Activated CD8-positive, alpha-beta memory T cell treated with anti-CD3 and anti-CD28 coated beads, Interleukin-2, amount 10 ng/mL, durations not matched to agents 7 days and 5 days (primary cell): ENCODE measurements at regions of chr3 and their contacts with region 1.

Region 1: DNA sequence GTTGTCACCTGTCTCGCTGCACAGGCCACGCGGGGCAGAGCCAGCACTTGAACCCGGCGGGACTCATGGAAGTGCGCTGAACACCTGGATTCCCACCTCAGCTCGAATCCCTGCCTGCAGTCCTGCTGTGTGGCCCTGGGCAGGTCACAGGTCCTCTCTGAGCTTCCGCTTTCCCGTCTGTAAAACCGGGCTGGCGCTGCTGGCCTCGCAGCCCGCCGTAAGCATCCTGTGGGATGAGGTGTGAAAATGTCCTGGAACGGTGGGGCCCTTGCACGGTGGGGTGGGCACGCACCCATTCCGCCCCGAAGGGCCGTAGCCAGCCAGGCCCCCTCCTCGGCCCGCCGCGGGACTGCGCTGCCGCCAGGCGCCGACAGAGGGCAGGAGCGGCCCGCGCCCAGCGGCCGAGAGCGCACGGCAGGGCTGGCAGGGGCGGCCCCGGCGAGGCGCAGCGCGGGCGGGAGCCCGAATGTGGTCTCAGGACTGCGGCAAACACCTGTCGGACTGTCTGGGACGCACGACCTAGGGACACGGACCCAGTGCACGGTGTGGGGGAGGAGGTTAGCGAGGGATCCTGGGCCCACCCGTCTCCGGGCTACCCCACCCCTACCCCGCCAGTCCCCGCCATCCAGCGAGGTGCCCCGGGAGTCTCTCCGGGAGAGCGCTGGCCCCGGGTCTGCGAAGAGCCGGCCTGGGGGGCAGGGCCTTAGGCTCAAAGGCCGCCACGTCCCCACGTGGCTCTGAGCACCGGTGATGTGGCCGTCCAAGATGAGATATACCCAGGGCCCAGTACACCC is 40.4 kb downstream of the DNAJB8 start:
- DNase-seq: peak; percentile 57
- ATAC-seq: peak; percentile 94
- H3K4me3 Mint-ChIP-seq: no peak overlapping the region
- H3K27ac Mint-ChIP-seq: no peak overlapping the region
- H3K4me1 Mint-ChIP-seq: peaks cover 2% of the 10 kb centered on the region
- H3K27me3 Mint-ChIP-seq: peaks cover 12% of the 10 kb centered on the region

Region 2: GRCh38 chr3:128170805-128171516 is 255.4 kb before region 1 on chr3:
- CTCF ChIA-PET with region 1: no interaction called
- DNase-seq: peak; percentile 39
- ATAC-seq: no peak
- H3K4me3 Mint-ChIP-seq: no peak overlapping the region
- H3K27ac Mint-ChIP-seq: no peak overlapping the region
- H3K4me1 Mint-ChIP-seq: peaks cover 2% of the 10 kb centered on the region
- H3K27me3 Mint-ChIP-seq: no peaks in the 10 kb centered on the region

Region 3: DNA sequence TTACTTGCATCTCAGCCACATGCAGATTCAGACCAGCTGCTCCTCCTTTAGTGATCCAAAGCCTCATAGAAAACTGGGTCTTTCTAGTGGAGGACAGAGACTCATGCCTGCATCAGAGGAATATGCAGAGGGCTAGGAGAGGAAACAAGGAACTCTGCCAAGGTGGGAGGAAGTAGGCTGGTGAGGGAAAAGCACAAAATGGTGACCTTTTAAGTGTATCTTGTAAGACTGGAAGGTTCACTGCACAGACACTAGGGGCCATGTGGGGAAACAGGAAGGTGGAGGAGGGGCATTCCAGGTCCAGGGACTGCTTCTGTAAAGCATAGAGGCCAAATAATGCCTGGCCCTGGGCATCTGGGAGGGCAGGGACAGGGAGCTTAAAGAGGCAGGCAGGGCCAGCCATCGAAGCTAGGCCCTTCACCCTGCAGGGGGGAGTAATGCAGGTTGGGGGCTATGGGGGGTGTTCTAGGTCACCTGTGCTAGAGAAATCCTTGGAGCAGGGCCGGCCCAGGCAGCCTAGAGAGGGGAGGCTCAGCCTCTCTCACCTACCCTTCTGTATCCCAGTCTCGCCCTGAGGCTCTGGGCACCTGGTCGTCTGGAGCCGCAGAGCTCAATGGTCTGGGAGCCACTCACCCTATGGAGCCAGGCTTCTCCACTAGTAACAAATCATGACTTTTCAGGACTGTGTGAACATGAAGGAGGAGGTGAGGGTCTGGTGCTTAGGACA is 77.4 kb before region 1 on chr3:
- CTCF ChIA-PET with region 1: no interaction called
- DNase-seq: no peak
- ATAC-seq: no peak
- H3K4me3 Mint-ChIP-seq: no peak overlapping the region
- H3K27ac Mint-ChIP-seq: no peak overlapping the region
- H3K4me1 Mint-ChIP-seq: no peaks in the 10 kb centered on the region
- H3K27me3 Mint-ChIP-seq: no peaks in the 10 kb centered on the region

Region 4: GRCh38 chr3:128447561-128448013 is 21.3 kb after region 1 on chr3:
- CTCF ChIA-PET with region 1: interaction called, 11 read pairs
- DNase-seq: peak; percentile 77
- ATAC-seq: peak; percentile 66
- H3K4me3 Mint-ChIP-seq: no peak overlapping the region
- H3K27ac Mint-ChIP-seq: peak overlapping the region; percentile 76
- H3K4me1 Mint-ChIP-seq: peaks cover 24% of the 10 kb centered on the region
- H3K27me3 Mint-ChIP-seq: peaks cover 6% of the 10 kb centered on the region

Region 5: GRCh38 chr3:128497387-128498126 is 71.2 kb after region 1 on chr3:
- CTCF ChIA-PET with region 1: interaction called, 15 read pairs
- DNase-seq: peak; percentile 67
- ATAC-seq: peak; percentile 75
- H3K4me3 Mint-ChIP-seq: peak overlapping the region; percentile 46
- H3K27ac Mint-ChIP-seq: no peak overlapping the region
- H3K4me1 Mint-ChIP-seq: peaks cover 6% of the 10 kb centered on the region
- H3K27me3 Mint-ChIP-seq: peaks cover 76% of the 10 kb centered on the region